ENCODE measurements at regions of chr1 and their contacts with region 1.

Region 1: DNA sequence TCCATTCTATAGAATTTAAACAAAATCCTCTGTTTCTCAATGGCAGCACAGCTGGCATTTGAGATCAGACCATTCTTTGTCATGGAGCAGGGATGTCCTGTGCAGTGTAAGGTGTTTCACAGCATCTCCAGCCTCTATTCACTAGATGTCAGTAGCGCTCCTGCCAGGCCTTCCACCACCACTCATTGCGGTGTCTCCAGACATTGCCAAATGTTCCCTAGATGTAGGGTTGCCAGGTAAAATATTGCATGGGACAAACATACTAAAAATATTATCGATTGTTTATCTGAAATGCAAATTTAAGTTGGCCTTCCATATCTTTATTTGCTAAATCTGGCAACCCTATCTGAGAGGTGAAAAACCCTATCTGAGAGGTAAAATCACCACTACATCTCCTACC is 11.7 kb downstream of the ITLN2 start:
- DNase-seq: peak; percentile 58
- ATAC-seq: peak; percentile 97
- H3K4me3 ChIP-seq: no peak overlapping the region
- H3K27ac ChIP-seq: no peak overlapping the region
- H3K4me1 ChIP-seq: 0 out of 2 replicates have a peak, but pooled peaks cover 7% of the 10 kb centered on the region
- H3K27me3 ChIP-seq: no peaks in the 10 kb centered on the region
- CTCF ChIP-seq: peak; percentile 67

Region 2: DNA sequence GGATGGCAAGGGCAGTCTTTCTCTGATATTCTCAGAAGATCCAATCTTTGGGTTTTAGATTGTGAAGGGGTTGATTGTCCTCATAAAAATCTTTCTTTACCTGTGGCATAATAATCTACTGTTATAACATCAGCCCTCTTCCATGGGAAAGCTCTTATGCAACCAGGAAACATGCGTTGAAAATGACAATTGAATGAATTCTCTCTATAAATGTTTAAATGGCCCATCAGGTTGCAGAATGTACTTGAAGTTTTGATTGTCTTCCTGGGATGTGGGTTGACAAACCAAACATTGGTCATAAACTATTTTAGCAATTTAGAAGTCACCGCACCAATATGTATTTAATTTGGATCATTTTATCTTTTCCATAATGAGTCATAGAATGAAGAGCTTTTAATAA is 26.3 kb before region 1 on chr1:
- CTCF ChIA-PET with region 1: no interaction called
- POLR2A ChIA-PET with region 1: no interaction called
- intact Hi-C with region 1: loop called (anchors 2 kb)
- DNase-seq: peak; percentile 98
- ATAC-seq: peak; percentile 94
- H3K4me3 ChIP-seq: no peak overlapping the region
- H3K27ac ChIP-seq: peak overlapping the region; percentile 94
- H3K4me1 ChIP-seq: peaks cover 19% of the 10 kb centered on the region
- H3K27me3 ChIP-seq: no peaks in the 10 kb centered on the region
- CTCF ChIP-seq: no peak

Measured in PC-3 (cell line).